Caco-2 (cell line): ENCODE measurements at regions of chr11 and their contacts with region 1.

Region 1: DNA sequence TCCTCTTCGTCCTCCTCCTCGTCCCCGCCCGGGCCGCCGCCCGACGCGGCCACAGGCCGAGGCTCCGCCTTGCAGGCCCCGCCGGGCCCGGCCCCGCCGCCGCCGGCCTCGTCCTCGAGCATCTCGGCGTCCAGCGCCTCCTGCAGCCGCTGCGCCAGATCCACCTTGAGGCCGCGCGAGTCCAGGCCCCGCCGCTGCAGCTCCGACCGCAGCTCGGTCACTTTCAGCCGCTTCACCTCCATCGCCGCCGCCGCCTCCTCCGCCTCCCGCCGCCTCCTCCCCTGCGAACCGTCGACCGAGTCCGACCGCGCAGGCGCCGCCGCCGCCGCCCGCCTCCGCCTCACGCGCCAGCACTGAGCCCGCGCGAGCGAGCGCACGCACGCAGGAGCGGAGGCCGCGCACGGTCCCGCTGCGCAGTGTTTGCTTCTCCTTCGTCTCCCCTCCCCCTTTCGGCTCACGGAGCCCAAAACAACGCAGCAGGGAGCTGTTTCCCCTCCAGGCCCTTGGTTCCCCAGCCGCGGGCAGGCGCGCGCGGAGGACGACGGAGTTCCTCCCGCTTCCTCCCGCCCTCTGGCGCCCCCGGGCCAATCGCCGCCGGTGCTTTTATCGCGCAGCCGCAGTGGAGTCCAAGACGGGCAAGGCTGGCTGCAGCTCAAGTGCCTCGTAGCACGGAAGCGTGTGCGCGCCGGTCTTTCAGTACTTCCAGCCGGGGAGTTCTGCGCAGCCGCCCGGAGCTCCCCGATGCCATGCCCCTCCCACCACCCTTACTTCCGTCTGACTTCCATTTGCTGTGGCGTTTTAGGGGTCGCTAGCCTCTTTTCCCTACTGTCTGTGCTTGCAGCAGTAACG is at the start of gene HNRNPUL2:
- DNase-seq: peak; percentile 99
- H3K4me3 ChIP-seq: peak within 1 kb of the TSS; percentile 94
- H3K4me3 Mint-ChIP-seq: peak within 1 kb of the TSS; percentile 99
- H3K27ac Mint-ChIP-seq: peak within 1 kb of the TSS; percentile 98
- H3K4me1 ChIP-seq: peaks cover 22% of the 10 kb centered on the region
- H3K4me1 Mint-ChIP-seq: peaks cover 27% of the 10 kb centered on the region
- H3K27me3 ChIP-seq: no peaks in the 10 kb centered on the region
- H3K27me3 Mint-ChIP-seq: no peaks in the 10 kb centered on the region
- CTCF ChIP-seq: no peak
- total RNA-seq, gene HNRNPUL2: 60.0 and 62.9 TPM in 2 replicates

Region 2: GRCh38 chr11:62472012-62472884 is 254.9 kb before region 1 on chr11:
- CTCF ChIA-PET with region 1: no interaction called
- POLR2A ChIA-PET with region 1: no interaction called
- intact Hi-C with region 1: no loop called
- DNase-seq: peak; percentile 75 to 84
- H3K4me3 ChIP-seq: no peak overlapping the region
- H3K4me3 Mint-ChIP-seq: peak overlapping the region; percentile 27
- H3K27ac Mint-ChIP-seq: peak overlapping the region; percentile 93
- H3K4me1 ChIP-seq: peaks cover 48% of the 10 kb centered on the region
- H3K4me1 Mint-ChIP-seq: peaks cover 27% of the 10 kb centered on the region
- H3K27me3 ChIP-seq: no peaks in the 10 kb centered on the region
- H3K27me3 Mint-ChIP-seq: no peaks in the 10 kb centered on the region
- CTCF ChIP-seq: no peak

Region 3: DNA sequence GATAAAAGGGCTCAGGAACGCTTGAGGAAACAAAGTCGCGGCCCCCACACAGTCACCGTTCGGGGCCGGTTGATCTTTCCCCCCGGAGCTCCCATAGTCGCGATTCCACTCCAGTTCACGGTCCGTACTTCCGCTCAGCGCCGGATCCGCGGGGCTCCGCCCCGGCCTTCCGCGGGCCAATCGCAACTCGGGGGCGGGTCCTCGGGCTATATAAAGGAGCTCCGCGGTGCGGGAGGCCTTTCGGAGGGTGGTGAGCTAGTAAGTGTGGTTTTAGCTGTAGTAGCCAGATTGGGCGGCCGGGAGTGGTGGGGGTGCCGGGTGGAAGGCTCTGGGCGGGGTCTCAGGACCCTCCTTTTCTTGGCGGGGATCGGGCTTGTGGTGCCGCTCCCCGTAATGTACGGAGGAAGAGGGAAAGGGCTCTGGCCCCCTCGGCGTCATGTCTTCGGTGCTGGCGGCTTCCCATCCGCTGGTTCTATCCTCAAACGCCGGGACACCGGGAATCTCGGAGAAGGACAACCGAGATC is 62.0 kb before region 1 on chr11 and contains the starts of genes C11orf98 and CSKMT:
- CTCF ChIA-PET with region 1: no interaction called
- POLR2A ChIA-PET with region 1: interaction called, 21 read pairs
- intact Hi-C with region 1: no loop called
- DNase-seq: peak; percentile 95 to 99
- H3K4me3 ChIP-seq: peak within 1 kb of the TSS; percentile 50
- H3K4me3 Mint-ChIP-seq: peak within 1 kb of the TSS; percentile 99
- H3K27ac Mint-ChIP-seq: peak within 1 kb of the TSS; percentile 97
- H3K4me1 ChIP-seq: peaks cover 15% of the 10 kb centered on the region
- H3K4me1 Mint-ChIP-seq: peaks cover 5% of the 10 kb centered on the region
- H3K27me3 ChIP-seq: no peaks in the 10 kb centered on the region
- H3K27me3 Mint-ChIP-seq: no peaks in the 10 kb centered on the region
- CTCF ChIP-seq: no peak
- total RNA-seq, gene C11orf98: 115 and 123 TPM in 2 replicates
- total RNA-seq, gene CSKMT: 38.2 and 40.1 TPM in 2 replicates

Region 4: GRCh38 chr11:62705880-62706849 is 21.0 kb before region 1 on chr11:
- CTCF ChIA-PET with region 1: interaction called, 4 read pairs
- POLR2A ChIA-PET with region 1: interaction called, 18 read pairs
- intact Hi-C with region 1: no loop called
- DNase-seq: peak; percentile 91 to 95
- H3K4me3 ChIP-seq: peak overlapping the region; percentile 55
- H3K4me3 Mint-ChIP-seq: peak overlapping the region; percentile 96
- H3K27ac Mint-ChIP-seq: peak overlapping the region; percentile 97
- H3K4me1 ChIP-seq: peaks cover 9% of the 10 kb centered on the region; the same call in 1 of the 2 replicates
- H3K4me1 Mint-ChIP-seq: peaks cover 18% of the 10 kb centered on the region
- H3K27me3 ChIP-seq: no peaks in the 10 kb centered on the region
- H3K27me3 Mint-ChIP-seq: no peaks in the 10 kb centered on the region
- CTCF ChIP-seq: no peak

Region 5: GRCh38 chr11:62771144-62772021 is 44.2 kb after region 1 on chr11 and contains the start of gene TAF6L:
- CTCF ChIA-PET with region 1: interaction called, 3 read pairs
- POLR2A ChIA-PET with region 1: interaction called, 7 read pairs
- intact Hi-C with region 1: loop called (anchors 2 kb)
- DNase-seq: peak; percentile 97 to 99
- H3K4me3 ChIP-seq: peak within 1 kb of the TSS; percentile 81
- H3K4me3 Mint-ChIP-seq: peak within 1 kb of the TSS; percentile 92
- H3K27ac Mint-ChIP-seq: peak within 1 kb of the TSS; percentile 99
- H3K4me1 ChIP-seq: peaks cover 6% of the 10 kb centered on the region
- H3K4me1 Mint-ChIP-seq: no peaks in the 10 kb centered on the region
- H3K27me3 ChIP-seq: no peaks in the 10 kb centered on the region
- H3K27me3 Mint-ChIP-seq: no peaks in the 10 kb centered on the region
- CTCF ChIP-seq: no peak
- total RNA-seq, gene TAF6L: 26.8 and 30.1 TPM in 2 replicates

Region 6: DNA sequence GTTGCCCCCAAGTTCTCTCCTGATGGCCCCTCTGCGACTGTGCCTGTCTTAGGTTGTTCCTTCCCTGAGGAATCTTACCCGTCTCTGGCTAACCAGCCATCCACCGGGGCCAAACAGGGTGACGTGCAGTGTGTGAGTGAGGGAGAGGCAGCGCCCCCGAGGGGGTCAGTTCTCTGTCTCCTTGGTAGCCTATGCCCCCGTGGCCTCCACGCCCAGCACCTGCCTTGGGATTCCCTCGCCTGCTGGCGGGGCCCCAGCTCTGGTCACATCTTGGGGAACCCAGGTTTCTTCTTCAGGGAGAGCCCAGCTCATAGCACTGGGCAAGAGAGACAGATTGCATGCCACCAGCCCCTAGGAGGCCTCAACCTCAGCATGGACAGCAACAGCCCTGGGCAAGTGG is 72.3 kb after region 1 on chr11:
- CTCF ChIA-PET with region 1: no interaction called
- POLR2A ChIA-PET with region 1: no interaction called
- intact Hi-C with region 1: no loop called
- DNase-seq: no peak
- H3K4me3 ChIP-seq: no peak overlapping the region
- H3K4me3 Mint-ChIP-seq: no peak overlapping the region
- H3K27ac Mint-ChIP-seq: no peak overlapping the region
- H3K4me1 ChIP-seq: no peaks in the 10 kb centered on the region
- H3K4me1 Mint-ChIP-seq: peaks cover 11% of the 10 kb centered on the region
- H3K27me3 ChIP-seq: no peaks in the 10 kb centered on the region
- H3K27me3 Mint-ChIP-seq: no peaks in the 10 kb centered on the region
- CTCF ChIP-seq: no peak

Region 7: DNA sequence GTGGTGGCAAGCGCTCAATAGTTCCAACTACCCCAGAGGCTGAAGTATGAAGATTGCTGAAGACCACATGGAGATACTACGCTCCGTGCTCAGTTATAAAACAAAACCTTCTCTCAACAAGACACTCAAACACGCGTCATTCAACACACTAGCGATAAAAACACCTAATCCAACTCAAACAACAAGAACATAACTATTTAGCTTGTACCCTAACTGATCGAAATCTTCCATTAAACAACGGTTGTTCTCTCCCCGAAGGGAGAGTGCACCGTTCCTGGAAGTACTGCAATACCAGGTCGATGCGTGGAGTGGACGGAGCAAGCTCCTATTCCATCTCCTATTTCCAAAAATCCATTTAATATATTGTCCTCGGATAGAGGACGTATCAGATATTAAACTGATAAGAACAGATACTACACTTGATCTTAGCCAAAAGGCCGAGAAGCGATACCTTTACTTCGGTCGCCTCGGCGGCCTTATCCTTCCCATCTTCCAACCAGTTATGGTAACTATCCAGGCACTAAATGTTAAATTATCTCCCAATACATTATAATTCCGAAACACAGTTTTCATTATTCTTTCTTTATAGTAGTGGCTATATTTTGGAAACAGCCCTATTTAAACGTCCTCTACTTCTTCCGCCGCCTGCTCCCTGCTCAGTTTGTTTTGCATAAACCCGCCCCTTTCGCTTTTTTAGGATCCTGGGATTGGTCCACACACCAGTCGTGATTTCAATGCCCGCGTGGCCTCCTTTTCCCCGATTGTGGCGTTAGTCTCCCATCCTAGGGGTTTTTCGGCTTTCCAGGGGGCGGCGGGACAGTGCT is 114.4 kb after region 1 on chr11:
- CTCF ChIA-PET with region 1: interaction called, 3 read pairs
- POLR2A ChIA-PET with region 1: interaction called, 19 read pairs
- intact Hi-C with region 1: no loop called
- DNase-seq: peak; percentile 96 to 98
- H3K4me3 ChIP-seq: peak overlapping the region; percentile 99
- H3K4me3 Mint-ChIP-seq: no peak overlapping the region
- H3K27ac Mint-ChIP-seq: no peak overlapping the region
- H3K4me1 ChIP-seq: no peaks in the 10 kb centered on the region
- H3K4me1 Mint-ChIP-seq: peaks cover 25% of the 10 kb centered on the region
- H3K27me3 ChIP-seq: no peaks in the 10 kb centered on the region
- H3K27me3 Mint-ChIP-seq: peaks cover 2% of the 10 kb centered on the region
- CTCF ChIP-seq: no peak